PC-9 (cell line): ENCODE measurements at regions of chr1 and their contacts with region 1.

Region 1: GRCh38 chr1:161749509-161750407 is at the start of gene DUSP12:
- DNase-seq: peak; percentile 89 to 90
- H3K4me3 ChIP-seq: peak within 1 kb of the TSS; percentile 76
- H3K27ac ChIP-seq: peak within 1 kb of the TSS; percentile 83
- H3K4me1 ChIP-seq: peaks cover 18% of the 10 kb centered on the region
- H3K27me3 ChIP-seq: no peaks in the 10 kb centered on the region
- CTCF ChIP-seq: peak; percentile 33; the same call in 1 of the 2 replicates
- total RNA-seq, gene DUSP12: 21.0 and 23.6 TPM in 2 replicates

Region 2: DNA sequence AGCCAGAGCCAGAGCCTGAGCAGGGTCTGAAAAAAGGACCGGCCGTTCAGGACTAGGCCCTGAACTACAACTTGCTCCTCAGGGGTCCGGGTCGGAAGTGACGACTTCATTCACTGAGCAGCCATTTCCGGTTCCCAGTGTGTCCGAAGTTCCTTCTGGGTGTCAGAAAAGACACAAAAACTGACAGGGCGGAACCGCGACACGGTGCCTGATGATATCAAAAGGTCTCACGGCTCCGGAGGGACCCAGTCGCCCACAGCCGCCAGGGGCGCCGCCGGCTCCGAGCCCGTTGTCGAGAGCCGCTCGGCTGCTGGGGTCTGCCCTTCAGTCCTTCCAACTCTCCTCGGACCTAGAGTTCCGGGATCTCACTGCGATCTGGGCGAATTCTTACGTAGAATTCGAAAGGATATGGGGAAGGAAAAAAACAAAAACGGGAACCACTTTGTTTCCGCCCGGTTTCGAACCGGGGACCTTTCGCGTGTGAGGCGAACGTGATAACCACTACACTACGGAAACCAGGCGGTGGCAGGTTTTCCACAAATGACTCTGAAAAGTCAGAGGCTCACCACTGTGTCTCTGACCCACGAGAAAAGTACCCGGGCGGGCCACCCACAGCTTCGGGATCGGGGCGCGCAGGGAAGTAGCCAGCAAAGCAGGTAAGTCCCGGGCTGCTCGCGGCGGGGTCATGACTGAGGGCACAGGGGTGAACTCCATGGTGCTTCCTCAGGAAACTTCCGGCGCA is 350.3 kb before region 1 on chr1:
- CTCF ChIA-PET with region 1: no interaction called
- POLR2A ChIA-PET with region 1: no interaction called
- intact Hi-C with region 1: loop called (anchors 10 kb)
- DNase-seq: peak; percentile 83 to 84
- H3K4me3 ChIP-seq: peak overlapping the region; percentile 67
- H3K27ac ChIP-seq: peak overlapping the region; percentile 99
- H3K4me1 ChIP-seq: peaks cover 44% of the 10 kb centered on the region
- H3K27me3 ChIP-seq: no peaks in the 10 kb centered on the region
- CTCF ChIP-seq: peak; percentile 59

Region 3: GRCh38 chr1:161676958-161677689 is 72.6 kb before region 1 on chr1:
- CTCF ChIA-PET with region 1: no interaction called
- POLR2A ChIA-PET with region 1: no interaction called
- intact Hi-C with region 1: no loop called
- DNase-seq: no peak
- H3K4me3 ChIP-seq: no peak overlapping the region
- H3K27ac ChIP-seq: no peak overlapping the region
- H3K4me1 ChIP-seq: no peaks in the 10 kb centered on the region
- H3K27me3 ChIP-seq: no peaks in the 10 kb centered on the region
- CTCF ChIP-seq: no peak

Region 4: DNA sequence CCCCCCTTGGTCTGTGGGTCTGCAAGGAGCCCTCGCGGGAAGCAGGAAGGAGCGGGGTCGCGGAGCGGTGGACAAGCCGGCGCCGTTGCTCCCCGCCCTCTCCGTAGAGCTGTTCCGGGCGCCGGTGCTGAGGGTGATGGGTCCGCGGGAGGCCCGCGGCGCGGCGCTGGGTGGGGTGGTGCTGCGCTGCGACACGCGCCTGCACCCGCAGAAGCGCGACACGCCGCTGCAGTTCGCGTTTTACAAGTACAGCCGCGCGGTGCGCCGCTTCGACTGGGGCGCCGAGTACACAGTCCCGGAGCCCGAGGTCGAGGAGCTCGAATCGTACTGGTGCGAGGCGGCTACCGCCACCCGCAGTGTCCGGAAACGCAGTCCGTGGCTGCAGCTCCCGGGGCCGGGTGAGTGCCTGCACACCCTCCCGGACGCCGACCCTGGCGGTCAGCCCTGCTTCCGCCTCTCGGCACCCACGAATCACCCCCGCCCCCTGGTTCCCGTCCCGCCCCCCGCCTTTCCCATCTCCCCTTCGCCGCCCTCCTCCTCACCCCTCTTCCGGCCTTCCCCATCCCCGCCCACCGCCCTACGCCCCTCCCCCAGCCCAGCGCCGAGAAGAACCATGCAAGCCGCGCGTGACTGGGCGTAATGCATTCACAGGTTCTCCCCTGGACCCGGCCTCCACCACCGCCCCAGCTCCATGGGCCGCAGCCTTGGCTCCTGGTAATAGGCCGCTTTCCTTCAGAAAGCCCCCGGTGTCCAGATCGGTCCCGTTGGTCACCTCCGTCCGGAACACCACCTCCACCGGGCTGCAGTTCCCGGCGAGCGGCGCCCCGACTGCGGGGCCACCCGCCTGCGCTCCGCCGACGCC is 22.9 kb before region 1 on chr1:
- CTCF ChIA-PET with region 1: no interaction called
- POLR2A ChIA-PET with region 1: no interaction called
- intact Hi-C with region 1: loop called (anchors 2 kb)
- DNase-seq: peak; percentile 70 to 80
- H3K4me3 ChIP-seq: peak overlapping the region; percentile 97
- H3K27ac ChIP-seq: peak overlapping the region; percentile 88
- H3K4me1 ChIP-seq: peaks cover 64% of the 10 kb centered on the region
- H3K27me3 ChIP-seq: no peaks in the 10 kb centered on the region
- CTCF ChIP-seq: no peak

Region 5: DNA sequence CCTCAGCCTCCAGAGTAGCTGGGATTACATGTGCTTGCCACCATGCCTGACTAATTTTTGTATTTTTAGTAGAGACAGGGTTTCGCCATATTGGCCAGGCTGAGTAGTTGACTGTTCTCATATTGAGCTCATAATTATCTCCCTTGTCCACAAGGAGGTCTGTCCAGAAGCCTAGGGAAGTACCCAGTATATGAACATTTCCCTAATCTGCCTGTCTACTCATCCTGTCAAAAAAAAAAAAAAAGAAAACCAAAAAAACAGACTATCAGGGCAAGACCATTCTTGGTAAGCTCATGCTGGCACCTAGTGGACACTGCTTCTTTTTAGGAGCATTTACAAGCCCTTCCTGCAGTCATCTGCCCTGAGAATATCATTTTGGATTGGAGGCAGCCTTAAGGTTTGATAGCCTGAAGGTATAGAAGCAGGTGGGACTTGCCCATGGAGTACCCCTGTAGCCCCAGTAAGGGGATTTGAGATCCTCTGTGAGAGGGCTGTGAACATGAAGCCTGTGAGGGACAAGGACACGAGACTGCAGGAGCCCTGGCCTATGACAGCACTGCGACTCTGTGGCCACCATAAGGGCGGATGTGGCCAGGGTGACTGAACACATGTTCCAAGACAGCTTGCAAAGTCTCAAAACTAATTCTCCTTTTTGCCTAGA is 11.0 kb before region 1 on chr1:
- CTCF ChIA-PET with region 1: no interaction called
- POLR2A ChIA-PET with region 1: interaction called, 13 read pairs
- intact Hi-C with region 1: no loop called
- DNase-seq: peak; percentile 48 to 70
- H3K4me3 ChIP-seq: no peak overlapping the region
- H3K27ac ChIP-seq: no peak overlapping the region
- H3K4me1 ChIP-seq: peaks cover 37% of the 10 kb centered on the region
- H3K27me3 ChIP-seq: no peaks in the 10 kb centered on the region
- CTCF ChIP-seq: peak; percentile 76

Region 6: GRCh38 chr1:161766102-161766981 is 16.6 kb after region 1 on chr1 and contains the start of gene ATF6:
- CTCF ChIA-PET with region 1: interaction called, 3 read pairs
- POLR2A ChIA-PET with region 1: interaction called, 11 read pairs
- intact Hi-C with region 1: no loop called
- DNase-seq: peak; percentile 83 to 88
- H3K4me3 ChIP-seq: peak within 1 kb of the TSS; percentile 74
- H3K27ac ChIP-seq: peak within 1 kb of the TSS; percentile 90
- H3K4me1 ChIP-seq: peaks cover 11% of the 10 kb centered on the region
- H3K27me3 ChIP-seq: no peaks in the 10 kb centered on the region
- CTCF ChIP-seq: no peak
- total RNA-seq, gene ATF6: 14.6 and 19.5 TPM in 2 replicates

Region 7: GRCh38 chr1:162035241-162035640 is 285.5 kb after region 1 on chr1:
- CTCF ChIA-PET with region 1: interaction called, 11 read pairs
- POLR2A ChIA-PET with region 1: interaction called, 4 read pairs
- intact Hi-C with region 1: loop called (anchors 5 kb)
- DNase-seq: peak in 1 of 2 experiments; percentile 27
- H3K4me3 ChIP-seq: no peak overlapping the region
- H3K27ac ChIP-seq: no peak overlapping the region
- H3K4me1 ChIP-seq: 0 out of 2 replicates have a peak, but pooled peaks cover 6% of the 10 kb centered on the region
- H3K27me3 ChIP-seq: no peaks in the 10 kb centered on the region
- CTCF ChIP-seq: no peak

Region 8: DNA sequence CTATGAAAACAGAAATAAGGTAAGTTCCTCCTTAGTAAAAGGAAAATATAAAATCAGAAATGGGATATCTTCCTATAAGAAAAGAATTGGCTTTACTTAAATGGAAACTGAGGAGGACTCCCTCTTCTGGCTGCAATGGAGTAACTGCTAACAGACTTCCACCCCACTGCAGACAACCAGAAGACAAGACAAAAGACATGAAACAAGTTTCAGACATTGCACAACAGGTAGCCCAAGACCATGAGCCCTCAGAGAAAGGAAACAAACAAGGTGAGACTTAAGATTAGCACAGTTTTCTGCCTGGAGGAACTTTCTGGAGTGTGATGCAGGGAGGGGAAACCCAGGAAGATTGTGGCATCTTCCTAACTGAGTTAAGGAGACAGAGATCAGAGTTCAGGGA is 290.9 kb after region 1 on chr1:
- CTCF ChIA-PET with region 1: interaction called, 11 read pairs
- POLR2A ChIA-PET with region 1: interaction called, 4 read pairs
- intact Hi-C with region 1: loop called (anchors 5 kb)
- DNase-seq: peak in 1 of 2 experiments; percentile 39
- H3K4me3 ChIP-seq: no peak overlapping the region
- H3K27ac ChIP-seq: no peak overlapping the region
- H3K4me1 ChIP-seq: 0 out of 2 replicates have a peak, but pooled peaks cover 1% of the 10 kb centered on the region
- H3K27me3 ChIP-seq: no peaks in the 10 kb centered on the region
- CTCF ChIP-seq: peak; percentile 58; the same call in 1 of the 2 replicates